ENCODE measurements at regions of chr16 and their contacts with region 1.

Region 1: GRCh38 chr16:15440852-15441251 is 6.5 kb downstream of the BMERB1 start:
- DNase-seq: no peak
- H3K4me3 ChIP-seq: no peak overlapping the region
- H3K27ac ChIP-seq: no peak overlapping the region
- H3K4me1 ChIP-seq: peaks cover 18% of the 10 kb centered on the region
- H3K27me3 ChIP-seq: no peaks in the 10 kb centered on the region
- CTCF ChIP-seq: no peak

Region 2: DNA sequence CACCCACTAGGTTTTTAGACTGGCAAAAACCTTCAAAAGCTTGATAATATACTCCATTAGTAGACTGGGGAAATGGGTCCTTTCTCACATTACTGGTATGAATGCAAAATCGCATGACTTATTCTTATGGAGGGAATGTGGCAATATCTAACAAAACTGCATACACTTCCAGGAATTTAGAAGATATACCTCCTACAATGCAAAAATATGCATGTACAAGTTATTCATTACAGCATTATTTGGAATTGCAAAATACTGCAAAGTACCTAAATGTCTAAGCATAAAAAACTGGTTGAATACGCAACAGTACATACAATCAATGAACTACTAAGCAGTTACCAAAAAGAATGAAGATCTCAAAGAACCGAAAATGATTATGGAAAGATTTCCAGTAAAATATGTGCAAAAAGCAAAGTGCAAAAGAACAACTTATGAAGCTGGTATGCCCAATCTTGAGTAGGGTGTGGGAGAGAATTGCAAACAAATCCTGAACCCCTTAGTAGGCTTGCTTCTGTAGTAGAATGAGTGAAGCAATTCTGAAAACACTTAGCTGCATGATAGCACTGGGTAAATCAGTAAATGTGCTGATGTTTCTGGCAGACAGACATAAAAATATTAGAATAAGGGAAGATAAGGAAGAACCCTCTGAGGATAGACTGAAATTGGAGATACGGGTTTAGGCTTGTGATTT is 990.9 kb before region 1 on chr16:
- intact Hi-C with region 1: no loop called
- DNase-seq: no peak
- H3K4me3 ChIP-seq: no peak overlapping the region
- H3K27ac ChIP-seq: no peak overlapping the region
- H3K4me1 ChIP-seq: peaks cover 15% of the 10 kb centered on the region
- H3K27me3 ChIP-seq: no peaks in the 10 kb centered on the region
- CTCF ChIP-seq: no peak

Region 3: DNA sequence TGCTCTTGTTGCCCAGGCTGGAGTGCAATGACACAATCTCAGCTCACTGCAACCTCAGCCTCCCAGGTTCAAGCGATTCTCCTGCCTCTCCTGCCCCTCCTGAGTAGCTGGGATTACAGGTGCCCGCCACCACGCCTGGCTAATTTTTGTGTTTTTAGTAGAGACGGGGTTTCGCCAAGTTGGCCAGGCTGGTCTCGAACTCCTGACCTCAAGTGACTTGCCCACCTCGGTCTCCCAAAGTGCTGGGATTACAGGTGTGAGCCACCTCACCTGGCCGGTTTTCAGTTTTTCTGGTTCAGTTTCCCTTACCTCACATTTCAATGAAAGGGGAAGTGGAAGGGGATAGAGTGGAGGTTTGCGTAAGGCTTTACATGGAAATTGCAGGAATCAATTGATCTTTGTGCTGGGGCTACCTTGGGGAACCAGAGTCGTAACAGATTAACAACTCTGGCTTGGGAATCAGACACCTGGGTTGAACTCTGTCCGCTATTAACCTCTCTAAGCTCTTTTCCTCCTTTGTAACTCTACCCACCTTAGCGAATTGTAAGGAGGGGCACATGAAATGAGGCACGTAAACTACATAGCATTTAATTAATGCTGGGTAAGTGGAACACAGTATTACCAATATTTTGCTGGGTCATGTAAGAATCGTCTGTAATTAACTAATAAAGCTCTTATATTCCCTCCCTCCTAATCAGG is 42.1 kb before region 1 on chr16:
- intact Hi-C with region 1: no loop called
- DNase-seq: no peak
- H3K4me3 ChIP-seq: no peak overlapping the region
- H3K27ac ChIP-seq: no peak overlapping the region
- H3K4me1 ChIP-seq: peaks cover 6% of the 10 kb centered on the region
- H3K27me3 ChIP-seq: peaks cover 12% of the 10 kb centered on the region
- CTCF ChIP-seq: no peak

Region 4: GRCh38 chr16:15553313-15554088 is 112.6 kb after region 1 on chr16:
- intact Hi-C with region 1: loop called (anchors 10 kb)
- DNase-seq: no peak
- H3K4me3 ChIP-seq: no peak overlapping the region
- H3K27ac ChIP-seq: no peak overlapping the region
- H3K4me1 ChIP-seq: peaks cover 12% of the 10 kb centered on the region
- H3K27me3 ChIP-seq: no peaks in the 10 kb centered on the region
- CTCF ChIP-seq: no peak

Region 5: GRCh38 chr16:15726715-15727114 is 285.9 kb after region 1 on chr16:
- intact Hi-C with region 1: loop called (anchors 10 kb)
- DNase-seq: no peak
- H3K4me3 ChIP-seq: no peak overlapping the region
- H3K27ac ChIP-seq: no peak overlapping the region
- H3K4me1 ChIP-seq: no peaks in the 10 kb centered on the region
- H3K27me3 ChIP-seq: no peaks in the 10 kb centered on the region
- CTCF ChIP-seq: no peak

Region 6: GRCh38 chr16:15790458-15790857 is 349.6 kb after region 1 on chr16:
- intact Hi-C with region 1: no loop called
- DNase-seq: no peak
- H3K4me3 ChIP-seq: no peak overlapping the region
- H3K27ac ChIP-seq: no peak overlapping the region
- H3K4me1 ChIP-seq: peaks cover 10% of the 10 kb centered on the region
- H3K27me3 ChIP-seq: peaks cover 10% of the 10 kb centered on the region
- CTCF ChIP-seq: no peak

Region 7: DNA sequence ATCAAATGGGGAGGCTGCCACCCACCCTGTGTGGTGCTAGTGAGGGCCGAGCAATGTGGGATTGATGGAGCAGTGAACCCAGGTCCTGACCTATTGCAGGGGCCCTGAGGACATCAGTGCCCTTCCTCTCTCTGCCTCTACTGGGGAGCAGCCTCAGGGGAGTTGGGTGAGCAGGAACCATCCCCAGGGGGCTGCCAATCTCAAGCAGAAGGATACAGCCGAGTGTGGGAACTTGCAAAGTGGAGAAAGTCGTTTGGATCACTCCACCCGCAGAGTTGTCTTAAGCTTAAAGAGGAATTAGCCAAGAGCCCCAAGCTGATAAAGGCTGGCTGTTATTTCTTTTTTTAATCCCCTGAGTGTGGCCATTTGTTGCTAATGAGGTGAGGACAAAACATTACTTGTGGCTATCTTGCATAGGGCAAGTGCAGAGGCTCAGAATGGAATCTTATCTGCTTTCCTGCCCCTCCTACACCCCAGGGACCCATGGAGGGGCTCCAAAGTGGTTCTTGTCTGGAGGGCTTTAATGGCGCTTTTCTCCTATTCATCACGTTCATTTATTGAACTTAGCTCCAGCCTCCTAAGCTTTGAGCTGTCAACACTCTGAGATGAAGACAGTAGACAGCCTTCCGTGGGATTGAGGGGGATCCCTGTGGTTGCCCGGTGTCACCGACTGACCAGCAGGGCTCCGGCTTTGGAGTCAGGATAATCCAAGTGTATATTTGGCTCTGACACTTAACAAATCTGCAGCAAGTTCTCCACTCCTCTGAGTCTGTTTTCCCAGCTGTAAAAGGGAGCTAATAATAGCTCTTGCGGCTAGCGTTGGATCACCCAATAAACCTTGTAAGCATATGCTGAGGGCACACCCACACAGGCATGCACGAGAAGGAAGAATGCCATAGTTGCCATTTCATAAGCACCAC is 370.9 kb after region 1 on chr16:
- intact Hi-C with region 1: no loop called
- DNase-seq: no peak
- H3K4me3 ChIP-seq: peak overlapping the region; percentile 2
- H3K27ac ChIP-seq: peak overlapping the region; percentile 47
- H3K4me1 ChIP-seq: peaks cover 31% of the 10 kb centered on the region
- H3K27me3 ChIP-seq: peaks cover 32% of the 10 kb centered on the region
- CTCF ChIP-seq: peak; percentile 25